ENCODE measurements at regions of chr14 and their contacts with region 1.

Region 1: DNA sequence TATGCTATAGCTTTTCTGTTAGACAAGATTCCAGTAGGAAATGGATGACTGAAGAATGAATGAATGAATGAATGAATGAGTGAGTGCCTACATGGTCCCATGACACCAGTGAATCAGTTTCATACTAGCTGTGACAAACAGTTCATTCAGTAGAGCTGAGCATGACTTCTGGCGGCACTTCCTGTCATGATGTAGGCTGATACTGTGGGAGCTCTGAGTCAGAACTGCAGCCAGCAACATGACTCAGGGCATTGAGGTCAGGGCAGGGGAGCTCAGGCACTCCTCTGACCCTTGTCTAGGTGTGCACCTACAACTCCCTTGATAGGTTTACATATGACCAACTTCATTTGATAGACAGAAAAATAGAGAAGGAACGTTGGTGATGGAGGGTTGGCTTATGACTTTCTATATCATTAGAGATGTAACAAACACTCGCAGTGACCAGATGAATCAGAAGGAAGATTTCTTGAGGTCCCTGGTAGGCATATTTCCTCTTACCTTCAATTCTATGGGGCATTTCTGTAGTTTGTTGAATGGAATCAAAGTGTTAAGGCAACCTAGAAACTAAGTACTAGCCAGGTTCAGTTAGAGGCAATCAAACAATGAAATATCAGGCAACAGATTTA is 139.3 kb upstream of the ARHGAP5 start:
- DNase-seq: peak; percentile 48 to 70
- H3K4me3 ChIP-seq: no peak overlapping the region
- H3K4me3 Mint-ChIP-seq: no peak overlapping the region
- H3K27ac Mint-ChIP-seq: peak overlapping the region; percentile 84
- H3K4me1 ChIP-seq: peaks cover 55% of the 10 kb centered on the region
- H3K4me1 Mint-ChIP-seq: peaks cover 42% of the 10 kb centered on the region
- H3K27me3 ChIP-seq: no peaks in the 10 kb centered on the region
- H3K27me3 Mint-ChIP-seq: no peaks in the 10 kb centered on the region
- CTCF ChIP-seq: no peak

Region 2: GRCh38 chr14:31968107-31968810 is 30.4 kb after region 1 on chr14:
- CTCF ChIA-PET with region 1: interaction called, 3 read pairs
- POLR2A ChIA-PET with region 1: interaction called, 3 read pairs
- intact Hi-C with region 1: loop called (anchors 2 kb)
- DNase-seq: no peak
- H3K4me3 ChIP-seq: no peak overlapping the region
- H3K4me3 Mint-ChIP-seq: no peak overlapping the region
- H3K27ac Mint-ChIP-seq: peak overlapping the region; percentile 39
- H3K4me1 ChIP-seq: peaks cover 30% of the 10 kb centered on the region
- H3K4me1 Mint-ChIP-seq: peaks cover 21% of the 10 kb centered on the region
- H3K27me3 ChIP-seq: no peaks in the 10 kb centered on the region
- H3K27me3 Mint-ChIP-seq: no peaks in the 10 kb centered on the region
- CTCF ChIP-seq: no peak

Region 3: DNA sequence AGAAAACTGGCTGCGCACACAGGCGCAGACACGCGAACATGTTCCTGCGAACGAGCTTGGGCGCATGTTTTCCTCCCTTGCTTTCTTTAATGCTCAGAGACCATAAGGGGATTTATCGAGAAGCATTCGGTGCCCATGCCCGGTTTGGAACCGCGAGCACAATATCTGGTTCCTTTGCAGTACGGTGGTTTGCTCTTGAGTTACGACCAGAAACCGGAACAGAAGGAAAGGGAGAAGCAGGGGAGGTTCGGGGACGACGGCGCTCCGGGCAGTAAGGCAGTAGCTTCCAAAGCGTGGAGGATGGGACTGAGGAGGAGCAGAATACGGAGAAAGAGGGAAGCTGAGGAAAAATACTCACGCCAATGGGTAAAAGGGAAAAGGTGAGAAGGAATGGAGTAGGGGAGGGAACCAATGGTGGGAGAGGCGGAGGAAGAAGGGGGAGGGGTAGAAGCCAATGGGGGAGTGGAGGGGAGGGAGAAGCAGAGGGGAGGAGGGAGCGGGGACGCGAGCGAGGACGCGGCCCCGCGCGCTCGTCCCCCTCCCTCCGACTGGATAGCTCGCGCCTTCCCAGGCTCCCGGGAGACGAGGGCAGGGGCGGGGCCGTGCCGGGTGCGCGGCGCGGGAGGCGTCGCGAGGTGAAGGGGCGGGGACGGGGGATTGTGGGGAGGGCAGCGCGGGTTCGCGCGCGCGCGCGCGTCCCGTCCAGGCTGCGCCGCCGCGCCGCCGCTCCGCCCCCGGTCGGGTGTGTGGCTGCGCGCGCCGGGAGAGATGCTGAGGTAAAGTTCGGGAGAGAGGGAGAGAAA is 138.6 kb after region 1 on chr14:
- CTCF ChIA-PET with region 1: interaction called, 5 read pairs
- POLR2A ChIA-PET with region 1: interaction called, 7 read pairs
- intact Hi-C with region 1: loop called (anchors 1 kb)
- DNase-seq: peak; percentile 97
- H3K4me3 ChIP-seq: peak overlapping the region; percentile 72
- H3K4me3 Mint-ChIP-seq: peak overlapping the region; percentile 87
- H3K27ac Mint-ChIP-seq: peak overlapping the region; percentile 77
- H3K4me1 ChIP-seq: peaks cover 34% of the 10 kb centered on the region
- H3K4me1 Mint-ChIP-seq: peaks cover 27% of the 10 kb centered on the region
- H3K27me3 ChIP-seq: no peaks in the 10 kb centered on the region
- H3K27me3 Mint-ChIP-seq: no peaks in the 10 kb centered on the region
- CTCF ChIP-seq: no peak

Region 4: DNA sequence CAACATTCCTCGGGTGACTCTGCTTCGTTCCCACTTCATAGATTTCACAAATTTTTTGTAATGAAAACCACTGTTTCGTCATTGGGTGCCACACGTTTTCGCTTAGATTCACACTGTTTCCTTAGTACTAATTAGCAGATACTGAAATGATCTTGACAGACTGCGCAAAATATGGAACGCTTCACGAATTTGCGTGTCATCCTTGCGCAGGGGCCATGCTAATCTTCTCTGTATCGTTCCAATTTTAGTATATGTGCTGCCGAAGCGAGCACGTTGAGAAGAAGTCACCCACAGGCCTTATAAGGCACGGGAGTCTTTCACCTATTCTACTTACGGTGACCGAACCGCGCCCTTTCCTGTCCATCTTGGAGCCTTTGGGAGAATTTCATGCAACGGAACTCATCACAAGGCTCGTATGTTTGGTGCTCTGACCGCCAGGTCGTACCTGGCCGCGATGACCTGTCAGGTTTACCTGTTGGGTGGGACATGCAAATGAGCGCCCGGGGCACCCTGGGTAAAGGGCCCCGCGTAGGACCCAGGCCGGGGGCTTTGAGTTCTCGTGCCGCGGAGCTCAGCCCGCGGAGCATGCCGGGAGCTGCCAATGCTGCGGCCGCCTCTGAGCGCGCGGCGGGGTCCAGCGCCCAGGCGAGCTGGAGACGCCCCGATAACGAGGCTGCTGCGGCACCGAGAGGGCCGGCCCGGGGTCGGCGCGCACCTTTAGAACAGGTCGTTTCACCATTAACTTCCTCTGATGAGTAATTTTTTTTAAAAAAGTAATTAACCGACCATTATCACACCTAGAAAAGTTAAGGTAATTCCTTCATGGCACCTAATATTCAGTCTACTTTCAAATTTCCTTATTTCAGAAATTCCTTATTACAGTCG is 265.4 kb after region 1 on chr14 and contains the start of gene RNU6-8:
- CTCF ChIA-PET with region 1: no interaction called
- POLR2A ChIA-PET with region 1: no interaction called
- intact Hi-C with region 1: loop called (anchors 2 kb)
- DNase-seq: peak; percentile 95
- H3K4me3 ChIP-seq: peak within 1 kb of the TSS; percentile 76
- H3K4me3 Mint-ChIP-seq: peak within 1 kb of the TSS; percentile 90
- H3K27ac Mint-ChIP-seq: peak within 1 kb of the TSS; percentile 98
- H3K4me1 ChIP-seq: 0 out of 2 replicates have a peak, but pooled peaks cover 5% of the 10 kb centered on the region
- H3K4me1 Mint-ChIP-seq: no peaks in the 10 kb centered on the region
- H3K27me3 ChIP-seq: no peaks in the 10 kb centered on the region
- H3K27me3 Mint-ChIP-seq: no peaks in the 10 kb centered on the region
- CTCF ChIP-seq: no peak
- total RNA-seq, gene RNU6-8: not detected in 2 replicates

Region 5: DNA sequence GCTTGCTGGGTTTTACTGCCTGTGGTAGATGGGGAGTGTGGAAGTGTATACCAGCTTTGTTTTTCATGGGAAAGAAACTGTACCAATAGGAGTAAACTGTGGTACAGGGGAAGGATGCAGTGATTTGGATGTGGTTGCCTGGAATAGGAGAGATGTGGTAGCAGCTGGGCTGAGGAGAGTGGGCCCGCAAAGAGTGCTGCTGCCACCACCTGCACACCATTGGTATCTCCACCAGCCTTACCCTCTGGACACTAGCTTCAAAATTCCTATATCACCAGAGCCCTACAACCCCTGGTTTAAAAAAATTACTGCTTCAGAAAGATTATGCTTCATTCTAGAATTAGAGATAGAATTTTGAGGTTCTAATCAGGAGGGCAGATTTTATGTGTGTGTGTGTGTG is 444.9 kb after region 1 on chr14:
- CTCF ChIA-PET with region 1: interaction called, 3 read pairs
- POLR2A ChIA-PET with region 1: no interaction called
- intact Hi-C with region 1: loop called (anchors 5 kb)
- DNase-seq: peak in 1 of 2 experiments; percentile 54
- H3K4me3 ChIP-seq: no peak overlapping the region
- H3K4me3 Mint-ChIP-seq: no peak overlapping the region
- H3K27ac Mint-ChIP-seq: no peak overlapping the region
- H3K4me1 ChIP-seq: peaks cover 64% of the 10 kb centered on the region
- H3K4me1 Mint-ChIP-seq: peaks cover 51% of the 10 kb centered on the region
- H3K27me3 ChIP-seq: no peaks in the 10 kb centered on the region
- H3K27me3 Mint-ChIP-seq: no peaks in the 10 kb centered on the region
- CTCF ChIP-seq: peak; percentile 23 to 63

Region 6: DNA sequence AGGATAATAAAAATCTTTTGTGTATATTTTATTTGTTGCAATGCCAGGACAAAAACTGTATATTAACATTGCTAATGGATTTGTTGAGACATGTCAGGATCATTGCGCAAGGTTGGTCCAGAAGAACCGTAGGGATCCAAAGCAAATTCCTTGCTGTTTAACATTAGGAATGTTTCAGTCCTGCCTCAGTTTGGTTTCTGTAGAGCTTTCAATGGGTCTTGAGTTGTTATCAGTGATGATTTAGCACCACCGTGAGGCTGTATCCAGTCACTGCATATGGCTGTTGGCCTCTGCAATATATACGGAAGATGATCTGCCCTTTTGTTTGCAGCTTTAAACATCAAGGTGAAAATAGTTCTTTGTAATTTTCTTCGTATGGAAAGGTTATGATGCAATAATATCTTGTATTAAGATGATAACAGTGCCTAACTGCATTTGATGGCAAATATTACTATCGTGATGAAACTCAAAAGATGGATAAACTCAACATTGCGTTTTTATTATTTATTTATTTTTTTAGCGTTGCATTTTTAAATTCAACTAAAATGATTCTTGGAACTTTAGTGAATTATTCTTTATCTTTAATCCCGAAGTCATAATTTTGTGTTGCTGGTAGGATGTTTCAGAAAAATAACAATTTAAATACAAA is 622.5 kb after region 1 on chr14:
- CTCF ChIA-PET with region 1: interaction called, 8 read pairs
- POLR2A ChIA-PET with region 1: no interaction called
- intact Hi-C with region 1: loop called (anchors 1 kb)
- DNase-seq: peak; percentile 59 to 71
- H3K4me3 ChIP-seq: no peak overlapping the region
- H3K4me3 Mint-ChIP-seq: no peak overlapping the region
- H3K27ac Mint-ChIP-seq: no peak overlapping the region
- H3K4me1 ChIP-seq: peaks cover 16% of the 10 kb centered on the region
- H3K4me1 Mint-ChIP-seq: no peaks in the 10 kb centered on the region
- H3K27me3 ChIP-seq: no peaks in the 10 kb centered on the region
- H3K27me3 Mint-ChIP-seq: no peaks in the 10 kb centered on the region
- CTCF ChIP-seq: peak; percentile 77 to 79